ENCODE measurements at regions of chr17 and their contacts with region 1.

Region 1: GRCh38 chr17:43316522-43317142 is 82.2 kb upstream of the ARL4D start:
- DNase-seq: peak; percentile 38
- ATAC-seq: no peak
- H3K4me3 Mint-ChIP-seq: no peak overlapping the region
- H3K27ac Mint-ChIP-seq: no peak overlapping the region
- H3K4me1 Mint-ChIP-seq: peaks cover 11% of the 10 kb centered on the region
- H3K27me3 Mint-ChIP-seq: no peaks in the 10 kb centered on the region

Region 2: GRCh38 chr17:42744806-42745617 is 571.6 kb before region 1 on chr17 and contains the start of gene EZH1:
- CTCF ChIA-PET with region 1: no interaction called
- POLR2A ChIA-PET with region 1: no interaction called
- intact Hi-C with region 1: loop called in 1 of 2 experiments (anchors 5 kb)
- DNase-seq: peak; percentile 96
- ATAC-seq: peak; percentile 91
- H3K4me3 Mint-ChIP-seq: peak within 1 kb of the TSS; percentile 89
- H3K27ac Mint-ChIP-seq: peak within 1 kb of the TSS; percentile 98
- H3K4me1 Mint-ChIP-seq: peaks cover 19% of the 10 kb centered on the region
- H3K27me3 Mint-ChIP-seq: peaks cover 7% of the 10 kb centered on the region
- total RNA-seq, gene EZH1: 28.6 to 29.5 TPM

Region 3: DNA sequence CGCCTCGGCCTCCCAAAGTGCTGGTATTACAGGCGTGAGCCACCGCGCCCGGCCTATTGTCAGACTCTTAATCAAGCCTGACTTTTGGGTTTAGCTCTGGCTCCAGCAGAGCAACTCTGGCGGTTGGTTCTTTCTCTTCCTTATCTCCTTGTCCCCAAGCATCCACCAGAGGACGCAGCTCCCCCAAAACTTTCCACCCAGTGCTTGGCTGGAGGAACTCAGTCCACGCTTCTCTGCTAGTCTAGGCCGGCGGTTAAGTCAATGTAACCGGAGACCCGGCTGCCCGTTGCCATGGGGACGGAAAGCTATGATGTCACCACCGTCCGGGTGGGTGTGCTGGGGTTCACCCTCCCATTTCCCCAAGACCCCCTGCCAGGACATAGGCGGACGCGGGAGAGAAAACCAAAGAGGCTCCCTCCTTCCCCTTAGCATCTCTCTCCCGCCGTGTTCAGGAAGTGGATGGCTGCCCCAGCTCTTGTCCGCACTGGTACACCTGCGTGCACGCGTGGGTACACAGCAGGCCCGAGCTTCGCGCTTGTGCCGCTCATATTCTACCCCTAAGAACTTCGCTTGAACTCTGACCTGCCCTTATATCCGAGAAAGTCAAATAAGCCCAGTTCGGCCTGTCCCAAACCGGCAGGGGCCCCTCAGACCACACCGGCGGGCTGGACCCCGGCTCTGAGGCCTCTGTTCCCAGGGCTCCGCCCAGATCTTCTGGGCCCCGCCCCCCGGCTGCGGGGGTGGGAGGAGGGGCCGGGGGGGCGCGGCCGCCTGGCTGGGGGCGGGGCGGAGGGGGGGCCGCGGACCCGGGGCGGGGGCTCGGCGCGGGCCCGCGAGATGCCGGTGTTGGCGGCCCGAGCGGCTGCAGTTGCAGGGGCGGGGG is 292.0 kb before region 1 on chr17 and contains the start of gene RND2:
- CTCF ChIA-PET with region 1: no interaction called
- POLR2A ChIA-PET with region 1: interaction called, 10 read pairs
- intact Hi-C with region 1: loop called in 1 of 2 experiments (anchors 1 kb)
- DNase-seq: peak; percentile 89
- ATAC-seq: peak; percentile 68
- H3K4me3 Mint-ChIP-seq: peak within 1 kb of the TSS; percentile 78
- H3K27ac Mint-ChIP-seq: peak within 1 kb of the TSS; percentile 71
- H3K4me1 Mint-ChIP-seq: peaks cover 26% of the 10 kb centered on the region
- H3K27me3 Mint-ChIP-seq: no peaks in the 10 kb centered on the region
- total RNA-seq, gene RND2: 0.05 to 0.16 TPM

Region 4: GRCh38 chr17:43200127-43200526 is 116.5 kb before region 1 on chr17:
- CTCF ChIA-PET with region 1: no interaction called
- POLR2A ChIA-PET with region 1: interaction called, 11 read pairs
- intact Hi-C with region 1: no loop called
- DNase-seq: peak; percentile 30
- ATAC-seq: peak; percentile 61
- H3K4me3 Mint-ChIP-seq: no peak overlapping the region
- H3K27ac Mint-ChIP-seq: peak overlapping the region; percentile 37
- H3K4me1 Mint-ChIP-seq: peaks cover 8% of the 10 kb centered on the region
- H3K27me3 Mint-ChIP-seq: no peaks in the 10 kb centered on the region

Region 5: GRCh38 chr17:43217614-43218087 is 99.0 kb before region 1 on chr17:
- CTCF ChIA-PET with region 1: interaction called, 4 read pairs
- POLR2A ChIA-PET with region 1: interaction called, 30 read pairs
- intact Hi-C with region 1: loop called (anchors 1 to 5 kb)
- DNase-seq: peak; percentile 59
- ATAC-seq: peak; percentile 95
- H3K4me3 Mint-ChIP-seq: peak overlapping the region; percentile 44
- H3K27ac Mint-ChIP-seq: peak overlapping the region; percentile 71
- H3K4me1 Mint-ChIP-seq: peaks cover 33% of the 10 kb centered on the region
- H3K27me3 Mint-ChIP-seq: no peaks in the 10 kb centered on the region

Region 6: DNA sequence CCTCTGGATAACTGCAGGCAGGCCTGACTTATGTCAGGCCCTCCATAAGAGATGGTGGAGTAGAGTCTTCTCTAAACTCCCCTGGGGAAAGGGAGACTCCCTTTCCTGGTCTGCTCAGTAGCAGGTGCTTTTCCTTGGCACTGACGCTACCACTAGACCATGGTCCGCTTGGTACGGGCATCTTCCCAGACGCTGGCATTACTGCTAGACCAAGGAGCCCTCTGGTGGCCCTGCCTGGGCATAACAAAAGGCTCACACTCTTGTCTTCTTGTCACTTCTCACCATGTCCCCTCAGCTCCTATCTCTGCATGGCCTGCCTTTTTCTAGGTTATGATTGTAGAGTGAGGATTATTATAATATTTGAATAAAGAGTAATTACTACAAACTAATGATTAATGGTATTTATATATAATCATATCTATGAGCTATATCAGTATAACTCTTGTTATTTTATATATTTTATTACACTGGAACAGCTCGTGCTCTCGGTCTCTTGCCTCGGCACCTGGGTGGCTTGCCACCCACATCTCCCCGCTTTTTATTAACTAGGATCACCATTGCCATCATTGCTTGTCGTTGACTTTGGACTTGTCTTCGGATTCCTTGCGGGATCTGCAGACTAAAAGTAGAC is 22.4 kb after region 1 on chr17:
- CTCF ChIA-PET with region 1: interaction called, 3 read pairs
- POLR2A ChIA-PET with region 1: interaction called, 10 read pairs
- intact Hi-C with region 1: loop called in 1 of 2 experiments (anchors 1 kb)
- DNase-seq: peak; percentile 81
- ATAC-seq: no peak
- H3K4me3 Mint-ChIP-seq: no peak overlapping the region
- H3K27ac Mint-ChIP-seq: no peak overlapping the region
- H3K4me1 Mint-ChIP-seq: peaks cover 38% of the 10 kb centered on the region
- H3K27me3 Mint-ChIP-seq: no peaks in the 10 kb centered on the region

Region 7: GRCh38 chr17:43367737-43368242 is 51.2 kb after region 1 on chr17:
- CTCF ChIA-PET with region 1: interaction called, 3 read pairs
- POLR2A ChIA-PET with region 1: interaction called, 110 read pairs
- intact Hi-C with region 1: no loop called
- DNase-seq: peak; percentile 62
- ATAC-seq: peak; percentile 53
- H3K4me3 Mint-ChIP-seq: peak overlapping the region; percentile 85
- H3K27ac Mint-ChIP-seq: peak overlapping the region; percentile 100
- H3K4me1 Mint-ChIP-seq: peaks cover 57% of the 10 kb centered on the region
- H3K27me3 Mint-ChIP-seq: no peaks in the 10 kb centered on the region

Region 8: GRCh38 chr17:43823350-43824084 is 506.9 kb after region 1 on chr17:
- CTCF ChIA-PET with region 1: no interaction called
- POLR2A ChIA-PET with region 1: no interaction called
- intact Hi-C with region 1: no loop called
- DNase-seq: no peak
- ATAC-seq: no peak
- H3K4me3 Mint-ChIP-seq: no peak overlapping the region
- H3K27ac Mint-ChIP-seq: no peak overlapping the region
- H3K4me1 Mint-ChIP-seq: no peaks in the 10 kb centered on the region
- H3K27me3 Mint-ChIP-seq: no peaks in the 10 kb centered on the region